ENCODE measurements at regions of chr3 and their contacts with region 1.

Region 1: GRCh38 chr3:134794950-134795745 is at the start of gene EPHB1:
- DNase-seq: peak; percentile 71
- H3K4me3 Mint-ChIP-seq: peak within 1 kb of the TSS; percentile 91
- H3K27ac Mint-ChIP-seq: peak within 1 kb of the TSS; percentile 80
- H3K4me1 Mint-ChIP-seq: peaks cover 41% of the 10 kb centered on the region
- H3K27me3 Mint-ChIP-seq: peaks cover 70% of the 10 kb centered on the region
- total RNA-seq, gene EPHB1: 5.0 and 5.2 TPM in 2 replicates

Region 2: GRCh38 chr3:134600685-134601463 is 194.3 kb before region 1 on chr3:
- intact Hi-C with region 1: loop called (anchors 1 kb)
- DNase-seq: peak; percentile 43
- H3K4me3 Mint-ChIP-seq: no peak overlapping the region
- H3K27ac Mint-ChIP-seq: no peak overlapping the region
- H3K4me1 Mint-ChIP-seq: peaks cover 7% of the 10 kb centered on the region
- H3K27me3 Mint-ChIP-seq: peaks cover 10% of the 10 kb centered on the region

Region 3: DNA sequence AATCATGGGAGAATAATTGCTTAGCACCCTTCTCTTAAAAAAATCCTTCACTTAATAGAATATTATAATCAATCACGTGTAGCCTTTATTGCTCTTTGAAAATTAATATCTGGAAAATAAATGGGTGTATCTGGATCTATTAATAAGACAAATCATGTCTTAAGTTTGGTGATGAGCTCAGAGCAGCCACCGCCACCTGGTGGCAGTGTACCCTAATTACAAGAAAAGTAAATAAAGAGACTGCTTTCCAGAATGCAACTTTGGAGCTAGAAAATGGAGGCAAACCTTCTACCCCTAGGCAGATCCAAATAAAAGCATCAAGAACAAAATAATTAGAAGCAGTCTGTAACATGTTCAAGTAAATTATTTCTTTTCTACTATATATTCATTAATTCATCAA is 43.5 kb after region 1 on chr3:
- intact Hi-C with region 1: loop called (anchors 1 kb)
- DNase-seq: no peak
- H3K4me3 Mint-ChIP-seq: no peak overlapping the region
- H3K27ac Mint-ChIP-seq: no peak overlapping the region
- H3K4me1 Mint-ChIP-seq: no peaks in the 10 kb centered on the region
- H3K27me3 Mint-ChIP-seq: peaks cover 13% of the 10 kb centered on the region

Region 4: GRCh38 chr3:134904241-134904771 is 109.2 kb after region 1 on chr3:
- intact Hi-C with region 1: loop called (anchors 1 kb)
- DNase-seq: peak; percentile 15
- H3K4me3 Mint-ChIP-seq: peak overlapping the region; percentile 16
- H3K27ac Mint-ChIP-seq: peak overlapping the region; percentile 77
- H3K4me1 Mint-ChIP-seq: peaks cover 14% of the 10 kb centered on the region
- H3K27me3 Mint-ChIP-seq: peaks cover 26% of the 10 kb centered on the region

Region 5: DNA sequence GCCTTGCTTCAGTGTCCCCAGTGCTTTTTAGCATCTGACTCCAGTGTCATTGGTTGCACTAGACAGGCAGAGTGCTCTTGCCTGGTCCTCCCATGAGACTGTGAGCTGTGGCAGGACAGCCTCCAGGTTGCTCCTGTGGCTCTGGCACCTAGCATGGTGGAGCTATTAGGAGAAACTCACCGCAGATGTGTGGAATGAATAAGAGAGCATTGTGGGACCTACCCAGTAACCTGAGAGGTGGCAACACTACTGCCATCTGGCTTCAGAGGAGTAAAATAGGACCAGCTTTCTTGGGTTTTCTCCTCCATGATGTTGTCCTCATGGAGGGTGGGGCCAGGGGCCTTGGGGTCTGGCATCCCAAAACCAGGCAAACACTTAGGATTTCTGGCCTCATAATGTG is 183.5 kb after region 1 on chr3:
- intact Hi-C with region 1: loop called (anchors 10 kb)
- DNase-seq: no peak
- H3K4me3 Mint-ChIP-seq: no peak overlapping the region
- H3K27ac Mint-ChIP-seq: no peak overlapping the region
- H3K4me1 Mint-ChIP-seq: no peaks in the 10 kb centered on the region
- H3K27me3 Mint-ChIP-seq: no peaks in the 10 kb centered on the region

Region 6: DNA sequence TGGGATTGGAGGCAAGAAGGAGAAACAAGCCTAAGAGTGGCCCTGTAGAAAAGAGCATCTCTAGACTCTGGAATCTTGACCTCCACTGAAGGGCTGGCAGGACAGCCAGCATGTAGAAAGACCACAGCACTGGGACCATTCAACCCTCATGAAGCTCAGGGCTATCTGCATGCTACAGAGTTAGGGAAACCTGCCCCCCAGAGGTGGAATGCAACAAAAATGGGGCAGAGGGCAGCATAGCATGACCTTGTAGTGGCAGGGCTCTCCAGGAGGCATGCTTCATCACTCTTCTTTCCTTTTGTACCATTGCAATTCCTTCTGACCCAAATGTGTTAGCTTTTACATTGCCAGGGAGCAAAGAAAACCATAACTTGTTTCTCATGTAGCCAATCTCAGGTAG is 445.3 kb after region 1 on chr3:
- intact Hi-C with region 1: loop called (anchors 5 kb)
- DNase-seq: no peak
- H3K4me3 Mint-ChIP-seq: no peak overlapping the region
- H3K27ac Mint-ChIP-seq: no peak overlapping the region
- H3K4me1 Mint-ChIP-seq: no peaks in the 10 kb centered on the region
- H3K27me3 Mint-ChIP-seq: peaks cover 1% of the 10 kb centered on the region

Region 7: GRCh38 chr3:135965506-135966270 is 1170.5 kb after region 1 on chr3 and contains the start of gene PPP2R3A:
- intact Hi-C with region 1: loop called (anchors 2 kb)
- DNase-seq: peak; percentile 58
- H3K4me3 Mint-ChIP-seq: peak within 1 kb of the TSS; percentile 75
- H3K27ac Mint-ChIP-seq: no peak within 1 kb of the TSS
- H3K4me1 Mint-ChIP-seq: peaks cover 5% of the 10 kb centered on the region
- H3K27me3 Mint-ChIP-seq: peaks cover 35% of the 10 kb centered on the region
- total RNA-seq, gene PPP2R3A: 0.15 TPM in 1 of 2 replicates, not detected in the other